ENCODE measurements at regions of chr9 and their contacts with region 1.

Region 1: DNA sequence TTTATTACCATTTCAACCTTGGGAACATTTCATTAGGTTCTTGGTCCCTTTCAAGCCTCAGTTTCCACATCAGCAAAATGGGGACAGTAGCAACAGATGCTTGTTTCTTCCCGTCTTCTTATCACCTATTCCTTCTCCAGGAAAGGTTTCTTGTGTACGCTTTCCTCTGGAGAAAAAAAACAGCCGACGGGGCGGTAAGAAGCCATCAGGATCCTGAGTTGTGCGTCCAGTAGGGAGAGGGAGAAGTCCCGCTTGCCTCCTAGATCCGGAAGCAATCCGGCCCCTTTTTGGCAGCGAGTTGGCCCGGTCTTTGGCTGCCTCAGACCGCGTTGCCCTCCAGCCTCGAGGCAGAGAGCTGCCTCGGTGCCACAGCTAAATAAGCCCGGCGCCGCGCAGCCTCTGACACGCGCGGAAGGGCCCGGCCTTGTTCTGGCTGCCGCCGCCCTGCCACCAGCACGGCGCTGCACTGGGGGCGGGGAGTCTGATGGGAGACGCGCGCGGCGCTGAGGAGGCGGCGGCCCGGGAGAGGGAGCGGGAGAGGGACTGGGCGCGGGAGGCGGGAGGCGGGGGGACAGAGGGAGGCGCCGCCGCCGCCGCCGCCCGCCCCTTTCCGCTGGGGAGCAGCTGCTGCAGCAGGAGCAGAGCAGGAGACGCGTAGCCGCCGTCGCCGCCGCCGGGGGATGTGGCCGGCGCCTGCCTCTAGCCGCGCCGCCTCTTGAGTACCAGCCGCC is at the start of gene SLC44A1:
- DNase-seq: peak; percentile 93
- H3K4me3 Mint-ChIP-seq: peak within 1 kb of the TSS; percentile 88
- H3K27ac Mint-ChIP-seq: peak within 1 kb of the TSS; percentile 69
- H3K4me1 Mint-ChIP-seq: peaks cover 31% of the 10 kb centered on the region
- H3K27me3 Mint-ChIP-seq: peaks cover 62% of the 10 kb centered on the region
- total RNA-seq, gene SLC44A1: 3.7 and 3.8 TPM in 2 replicates

Region 2: DNA sequence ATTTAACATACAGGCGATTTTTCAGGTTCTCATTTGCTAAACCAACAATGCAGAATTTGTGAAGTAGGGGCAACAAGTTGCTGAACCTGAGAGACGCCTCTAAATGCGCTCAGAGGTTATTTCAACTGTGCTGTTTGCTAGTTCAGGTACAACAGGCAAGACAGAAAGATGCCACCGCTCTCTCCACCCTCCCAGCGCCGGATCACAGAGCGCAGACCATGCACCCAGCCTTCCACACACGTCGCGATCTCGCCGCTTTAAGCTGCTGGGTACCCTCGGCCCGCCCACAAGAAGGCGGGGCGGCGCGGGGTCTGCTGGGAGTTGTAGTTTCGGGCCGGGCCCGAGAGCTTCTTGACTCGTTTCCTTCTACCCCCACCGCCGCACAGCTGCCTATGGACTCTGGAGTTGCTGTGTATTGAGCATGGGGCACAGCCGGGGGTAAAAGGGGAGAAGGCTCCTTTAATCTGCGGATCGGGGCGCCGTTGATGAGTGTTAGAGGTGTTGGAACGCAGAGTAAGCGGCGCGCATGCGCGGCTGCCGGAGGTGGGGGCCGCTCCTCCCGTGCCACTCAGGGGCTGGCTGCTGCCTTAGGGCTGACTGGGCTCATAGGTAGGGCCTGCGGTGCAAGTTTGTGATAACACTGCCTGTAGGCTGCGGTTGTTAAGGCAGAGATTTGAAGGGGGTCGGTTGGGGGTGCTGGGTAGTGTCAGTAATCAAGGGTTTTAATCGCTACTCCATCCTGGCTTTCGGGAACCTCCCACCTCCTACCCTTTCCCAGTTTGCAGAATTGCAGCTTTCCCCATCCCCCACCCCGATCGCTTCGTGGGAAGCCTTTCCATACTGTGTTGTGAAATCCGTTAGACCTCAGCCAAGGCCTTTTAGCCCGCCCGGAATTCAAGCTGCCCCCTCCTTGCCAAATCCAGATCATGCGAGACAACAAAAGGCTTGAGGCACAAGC is 275.9 kb before region 1 on chr9:
- intact Hi-C with region 1: loop called (anchors 1 kb)
- DNase-seq: peak; percentile 84
- H3K4me3 Mint-ChIP-seq: peak overlapping the region; percentile 92
- H3K27ac Mint-ChIP-seq: peak overlapping the region; percentile 66
- H3K4me1 Mint-ChIP-seq: peaks cover 13% of the 10 kb centered on the region
- H3K27me3 Mint-ChIP-seq: peaks cover 21% of the 10 kb centered on the region

Region 3: GRCh38 chr9:105173306-105173705 is 70.9 kb before region 1 on chr9:
- intact Hi-C with region 1: no loop called
- DNase-seq: no peak
- H3K4me3 Mint-ChIP-seq: no peak overlapping the region
- H3K27ac Mint-ChIP-seq: no peak overlapping the region
- H3K4me1 Mint-ChIP-seq: no peaks in the 10 kb centered on the region
- H3K27me3 Mint-ChIP-seq: peaks cover 4% of the 10 kb centered on the region

Region 4: GRCh38 chr9:105357937-105358336 is 113.8 kb after region 1 on chr9:
- intact Hi-C with region 1: loop called (anchors 1 kb)
- DNase-seq: no peak
- H3K4me3 Mint-ChIP-seq: no peak overlapping the region
- H3K27ac Mint-ChIP-seq: no peak overlapping the region
- H3K4me1 Mint-ChIP-seq: peaks cover 18% of the 10 kb centered on the region
- H3K27me3 Mint-ChIP-seq: no peaks in the 10 kb centered on the region

Region 5: GRCh38 chr9:105385381-105385985 is 141.3 kb after region 1 on chr9:
- intact Hi-C with region 1: no loop called
- DNase-seq: peak; percentile 25
- H3K4me3 Mint-ChIP-seq: peak overlapping the region; percentile 82
- H3K27ac Mint-ChIP-seq: peak overlapping the region; percentile 68
- H3K4me1 Mint-ChIP-seq: peaks cover 27% of the 10 kb centered on the region
- H3K27me3 Mint-ChIP-seq: peaks cover 6% of the 10 kb centered on the region

Region 6: GRCh38 chr9:105414947-105415661 is 170.9 kb after region 1 on chr9:
- intact Hi-C with region 1: loop called (anchors 2 kb)
- DNase-seq: peak; percentile 25
- H3K4me3 Mint-ChIP-seq: no peak overlapping the region
- H3K27ac Mint-ChIP-seq: no peak overlapping the region
- H3K4me1 Mint-ChIP-seq: peaks cover 13% of the 10 kb centered on the region
- H3K27me3 Mint-ChIP-seq: peaks cover 46% of the 10 kb centered on the region

Region 7: GRCh38 chr9:105557771-105558610 is 313.8 kb after region 1 on chr9 and contains the start of gene FKTN:
- intact Hi-C with region 1: loop called (anchors 1 kb)
- DNase-seq: peak; percentile 76
- H3K4me3 Mint-ChIP-seq: peak within 1 kb of the TSS; percentile 94
- H3K27ac Mint-ChIP-seq: peak within 1 kb of the TSS; percentile 71
- H3K4me1 Mint-ChIP-seq: peaks cover 22% of the 10 kb centered on the region
- H3K27me3 Mint-ChIP-seq: no peaks in the 10 kb centered on the region
- total RNA-seq, gene FKTN: 12.4 and 12.6 TPM in 2 replicates

Measured in activated T-helper 1 cell treated with anti-CD3 and anti-CD28 coated beads, Interleukin-12 subunit alpha, Interleukin-12 subunit beta, Interleukin-2, Interleukin-4 antibody, amounts not matched to agents 30 ng/mL and 10 ng/mL and 1 ng/mL, durations not matched to agents 14 hours and 24 hours and 36 hours (primary cell).